AG04449 (cell line): ENCODE measurements at regions of chr18 and their contacts with region 1.

Region 1: GRCh38 chr18:36942264-36942663 is 113.3 kb downstream of the KIAA1328 start:
- DNase-seq: peak; percentile 1
- H3K4me3 ChIP-seq: no peak overlapping the region
- CTCF ChIP-seq: peak; percentile 54

Region 2: GRCh38 chr18:36661999-36662398 is 280.3 kb before region 1 on chr18:
- CTCF ChIA-PET with region 1: no interaction called
- POLR2A ChIA-PET with region 1: no interaction called
- DNase-seq: no peak
- H3K4me3 ChIP-seq: no peak overlapping the region
- CTCF ChIP-seq: peak; percentile 43

Region 3: DNA sequence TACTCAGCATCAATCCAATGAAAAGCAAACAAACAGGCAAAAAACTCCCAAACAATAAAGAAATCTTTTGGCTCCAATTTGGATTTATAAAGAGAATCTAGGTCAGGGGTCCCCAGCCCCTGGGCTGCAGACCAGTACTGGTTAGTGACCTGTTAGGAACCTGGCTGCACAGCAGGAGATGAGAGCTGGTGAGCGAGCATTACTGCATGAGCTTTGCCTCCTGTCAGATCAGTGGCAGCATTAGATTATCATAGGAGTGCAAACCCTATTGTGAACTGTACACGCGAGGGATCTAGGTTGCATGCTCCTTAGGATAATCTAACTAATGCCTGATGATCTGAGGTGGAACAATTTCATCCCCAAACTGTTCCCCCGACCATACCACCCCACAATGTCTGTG is 11.2 kb before region 1 on chr18:
- CTCF ChIA-PET with region 1: interaction called, 13 read pairs
- POLR2A ChIA-PET with region 1: no interaction called
- DNase-seq: no peak
- H3K4me3 ChIP-seq: no peak overlapping the region
- CTCF ChIP-seq: no peak

Region 4: GRCh38 chr18:37335409-37335736 is 393.1 kb after region 1 on chr18:
- CTCF ChIA-PET with region 1: interaction called, 27 read pairs
- POLR2A ChIA-PET with region 1: no interaction called
- DNase-seq: no peak
- H3K4me3 ChIP-seq: no peak overlapping the region
- CTCF ChIP-seq: peak; percentile 46